OCI-LY7 (cell line): ENCODE measurements at regions of chr1 and their contacts with region 1.

Region 1: GRCh38 chr1:55140546-55140983 is 74.6 kb downstream of the USP24 start:
- DNase-seq: peak; percentile 76
- H3K4me3 ChIP-seq: no peak overlapping the region
- H3K27ac ChIP-seq: no peak overlapping the region
- H3K4me1 ChIP-seq: no peaks in the 10 kb centered on the region
- CTCF ChIP-seq: peak; percentile 96

Region 2: DNA sequence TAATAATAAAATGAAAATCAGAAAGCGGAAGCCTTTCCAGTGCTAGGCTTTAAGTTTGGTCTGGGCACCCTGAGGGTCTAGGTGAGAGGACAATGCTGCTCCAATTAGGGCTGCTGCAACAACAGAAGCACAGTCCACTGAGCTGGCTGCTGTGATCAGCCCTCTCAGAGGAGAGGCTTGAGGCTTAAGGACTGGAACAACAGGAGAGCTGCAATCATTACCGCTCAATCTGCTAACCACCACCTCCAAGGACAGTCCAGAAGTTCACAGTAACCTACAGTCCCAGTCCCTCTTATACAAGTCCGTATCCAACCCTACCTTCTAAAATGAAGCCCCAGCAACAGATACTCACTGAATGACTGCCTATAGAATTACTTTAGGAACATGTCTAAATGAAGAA is 12.5 kb after region 1 on chr1:
- CTCF ChIA-PET with region 1: no interaction called
- POLR2A ChIA-PET with region 1: interaction called, 15 read pairs
- intact Hi-C with region 1: no loop called
- DNase-seq: no peak
- H3K4me3 ChIP-seq: no peak overlapping the region
- H3K27ac ChIP-seq: no peak overlapping the region
- H3K4me1 ChIP-seq: no peaks in the 10 kb centered on the region
- CTCF ChIP-seq: no peak

Region 3: DNA sequence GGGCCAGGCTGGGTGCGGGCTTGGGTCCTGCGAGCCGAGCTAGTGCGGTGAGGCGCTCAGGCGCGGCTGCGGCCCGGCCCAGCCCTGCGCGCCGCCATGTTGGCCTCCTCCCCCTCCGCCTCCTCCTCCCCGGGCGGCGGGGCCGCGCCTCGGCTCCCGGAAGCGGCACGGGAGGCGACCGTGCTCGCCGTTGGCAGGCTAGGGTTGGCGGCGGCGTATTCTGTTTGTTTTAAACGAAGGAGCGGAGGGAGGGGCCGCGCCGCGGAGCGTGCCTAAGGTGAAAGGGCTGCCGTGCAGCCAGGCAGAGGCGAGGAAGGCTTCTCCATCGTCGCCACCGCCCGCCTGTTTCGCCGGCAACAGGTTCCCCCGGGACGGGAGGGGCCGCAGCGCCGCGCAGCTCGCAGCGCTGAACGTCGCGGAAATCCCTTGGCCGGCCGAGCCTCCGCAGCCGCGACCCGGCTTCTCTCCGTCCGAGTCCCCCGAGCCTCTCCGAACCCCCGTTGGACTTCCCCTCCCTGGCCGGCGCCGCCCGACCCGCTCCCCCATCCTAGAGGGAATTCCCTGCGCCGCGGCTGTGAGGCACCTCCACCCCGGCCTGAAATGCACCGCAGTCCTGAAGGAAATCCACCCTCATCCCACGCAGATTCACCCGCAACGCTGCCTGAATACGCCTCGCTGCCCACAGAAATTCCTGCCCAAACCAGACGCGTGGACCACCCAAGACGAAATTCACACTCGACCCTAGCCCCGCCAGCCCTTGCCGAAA is 74.9 kb after region 1 on chr1 and contains the start of gene USP24:
- CTCF ChIA-PET with region 1: no interaction called
- POLR2A ChIA-PET with region 1: interaction called, 3 read pairs
- intact Hi-C with region 1: loop called (anchors 2 kb)
- DNase-seq: peak; percentile 84
- H3K4me3 ChIP-seq: peak within 1 kb of the TSS; percentile 94
- H3K27ac ChIP-seq: peak within 1 kb of the TSS; percentile 68
- H3K4me1 ChIP-seq: peaks cover 51% of the 10 kb centered on the region
- CTCF ChIP-seq: no peak
- total RNA-seq, gene USP24: 35.1 and 42.5 TPM in 2 replicates

Region 4: GRCh38 chr1:55277377-55278130 is 137.0 kb after region 1 on chr1:
- CTCF ChIA-PET with region 1: interaction called, 3 read pairs
- POLR2A ChIA-PET with region 1: interaction called, 4 read pairs
- intact Hi-C with region 1: loop called (anchors 1 kb)
- DNase-seq: peak; percentile 82
- H3K4me3 ChIP-seq: peak overlapping the region; percentile 11
- H3K27ac ChIP-seq: no peak overlapping the region
- H3K4me1 ChIP-seq: peaks cover 16% of the 10 kb centered on the region
- CTCF ChIP-seq: peak; percentile 92

Region 5: GRCh38 chr1:55337801-55338447 is 197.4 kb after region 1 on chr1:
- CTCF ChIA-PET with region 1: no interaction called
- POLR2A ChIA-PET with region 1: no interaction called
- intact Hi-C with region 1: loop called (anchors 2 kb)
- DNase-seq: peak; percentile 55
- H3K4me3 ChIP-seq: no peak overlapping the region
- H3K27ac ChIP-seq: no peak overlapping the region
- H3K4me1 ChIP-seq: no peaks in the 10 kb centered on the region
- CTCF ChIP-seq: peak; percentile 74

Region 6: DNA sequence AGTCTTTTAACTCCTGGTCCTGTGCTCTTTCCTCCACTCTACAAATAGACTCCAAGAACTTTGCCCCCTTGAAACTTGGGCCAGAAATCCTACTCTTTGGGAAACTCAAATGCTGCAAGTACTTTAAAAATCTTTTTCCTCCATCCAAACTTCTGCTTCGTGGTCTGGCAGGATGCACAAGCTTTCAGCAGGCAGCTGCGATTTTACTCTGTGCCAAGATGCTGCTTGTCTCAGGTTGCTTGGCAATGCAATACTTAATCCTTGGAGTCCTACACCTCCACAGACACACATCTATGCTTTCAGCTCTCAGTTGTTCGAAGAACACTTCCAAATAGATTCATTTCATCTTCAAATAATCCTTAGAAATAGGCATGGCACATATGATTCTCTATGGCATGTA is 509.9 kb after region 1 on chr1:
- CTCF ChIA-PET with region 1: no interaction called
- POLR2A ChIA-PET with region 1: no interaction called
- intact Hi-C with region 1: no loop called
- DNase-seq: no peak
- H3K4me3 ChIP-seq: no peak overlapping the region
- H3K27ac ChIP-seq: no peak overlapping the region
- H3K4me1 ChIP-seq: no peaks in the 10 kb centered on the region
- CTCF ChIP-seq: no peak

Region 7: GRCh38 chr1:55997536-55997935 is 857.0 kb after region 1 on chr1:
- CTCF ChIA-PET with region 1: no interaction called
- POLR2A ChIA-PET with region 1: no interaction called
- intact Hi-C with region 1: no loop called
- DNase-seq: no peak
- H3K4me3 ChIP-seq: no peak overlapping the region
- H3K27ac ChIP-seq: no peak overlapping the region
- H3K4me1 ChIP-seq: no peaks in the 10 kb centered on the region
- CTCF ChIP-seq: no peak